CD8-positive, alpha-beta T cell (primary cell): ENCODE measurements at regions of chr5 and their contacts with region 1.

Region 1: GRCh38 chr5:149035372-149035790 is 27.5 kb downstream of the SH3TC2 start:
- DNase-seq: peak; percentile 51 to 80 (median 67)
- ATAC-seq: peak; percentile 52
- H3K4me3 ChIP-seq: no peak overlapping the region
- H3K4me3 Mint-ChIP-seq: no peak overlapping the region
- H3K27ac ChIP-seq: no peak overlapping the region
- H3K27ac Mint-ChIP-seq: no peak overlapping the region
- H3K4me1 ChIP-seq: no peaks in the 10 kb centered on the region
- H3K4me1 Mint-ChIP-seq: peaks cover 15% of the 10 kb centered on the region
- H3K27me3 ChIP-seq: no peaks in the 10 kb centered on the region
- H3K27me3 Mint-ChIP-seq: peaks cover 6% of the 10 kb centered on the region
- CTCF ChIP-seq: peak; percentile 70

Region 2: GRCh38 chr5:148179234-148179824 is 856.1 kb before region 1 on chr5:
- CTCF ChIA-PET with region 1: no interaction called
- POLR2A ChIA-PET with region 1: no interaction called
- intact Hi-C with region 1: loop called (anchors 2 to 5 kb)
- DNase-seq: peak in 3 of 9 experiments; percentile 5 to 64 (median 51)
- ATAC-seq: no peak
- H3K4me3 ChIP-seq: no peak overlapping the region
- H3K4me3 Mint-ChIP-seq: no peak overlapping the region
- H3K27ac ChIP-seq: no peak overlapping the region
- H3K27ac Mint-ChIP-seq: no peak overlapping the region
- H3K4me1 ChIP-seq: no peaks in the 10 kb centered on the region
- H3K4me1 Mint-ChIP-seq: no peaks in the 10 kb centered on the region
- H3K27me3 ChIP-seq: no peaks in the 10 kb centered on the region
- H3K27me3 Mint-ChIP-seq: peaks cover 12% of the 10 kb centered on the region
- CTCF ChIP-seq: peak; percentile 62

Region 3: DNA sequence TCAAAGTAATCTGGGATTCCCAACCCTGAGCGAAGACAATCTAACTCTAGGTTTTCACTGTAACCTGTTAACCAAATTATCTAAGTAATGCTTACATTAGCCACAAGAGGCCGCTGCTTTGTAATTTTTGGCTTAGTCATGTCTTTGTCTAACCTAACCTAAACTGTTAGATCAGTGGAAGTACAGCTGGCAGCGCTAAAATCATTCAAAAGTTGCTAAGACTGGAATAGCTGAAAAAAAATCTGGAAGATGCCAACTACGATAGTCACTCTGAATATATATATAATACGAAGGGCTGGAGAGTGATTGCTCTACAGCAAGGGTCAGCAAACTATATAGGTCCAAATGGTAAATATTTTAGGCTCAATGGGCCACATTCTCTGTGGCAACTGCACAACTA is 591.4 kb before region 1 on chr5:
- CTCF ChIA-PET with region 1: interaction called, 16 read pairs
- POLR2A ChIA-PET with region 1: no interaction called
- intact Hi-C with region 1: loop called (anchors 1 kb)
- DNase-seq: peak in 7 of 9 experiments; percentile 12 to 65 (median 45)
- ATAC-seq: peak; percentile 77
- H3K4me3 ChIP-seq: no peak overlapping the region
- H3K4me3 Mint-ChIP-seq: no peak overlapping the region
- H3K27ac ChIP-seq: no peak overlapping the region
- H3K27ac Mint-ChIP-seq: no peak overlapping the region
- H3K4me1 ChIP-seq: no peaks in the 10 kb centered on the region
- H3K4me1 Mint-ChIP-seq: peaks cover 2% of the 10 kb centered on the region
- H3K27me3 ChIP-seq: no peaks in the 10 kb centered on the region
- H3K27me3 Mint-ChIP-seq: no peaks in the 10 kb centered on the region
- CTCF ChIP-seq: peak; percentile 87

Region 4: DNA sequence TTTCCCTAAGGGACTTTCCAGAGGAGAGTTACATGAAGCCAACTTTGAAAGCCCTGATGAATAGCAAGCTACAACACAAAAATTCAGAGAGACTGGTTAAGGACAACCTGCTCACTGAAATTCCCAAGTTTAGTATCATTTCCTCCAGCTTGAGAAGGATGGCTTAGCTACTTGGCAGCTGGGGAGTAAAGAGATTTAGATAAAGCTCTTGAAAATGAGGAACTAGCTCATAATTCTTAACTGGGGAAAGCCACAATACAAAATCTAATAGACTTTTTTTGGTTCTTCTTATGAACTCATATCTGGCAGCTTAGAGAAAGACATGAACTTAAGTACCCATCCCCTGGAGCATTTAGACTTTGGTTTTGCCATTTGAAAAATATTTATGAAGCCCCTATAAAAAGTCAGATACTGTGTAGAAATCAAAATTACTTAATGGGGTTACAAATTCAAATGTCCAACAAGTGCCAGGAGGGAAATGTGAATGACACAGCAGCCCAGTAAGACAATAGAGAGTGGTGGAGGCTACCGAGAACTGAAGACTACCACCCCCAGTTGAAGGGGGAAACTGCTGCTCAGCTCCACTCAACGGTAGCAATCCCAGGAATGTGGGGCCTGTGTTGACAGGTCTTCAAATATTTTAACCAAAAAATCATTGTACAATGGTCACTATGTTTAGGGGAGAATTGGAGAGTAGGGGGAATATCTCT is 288.4 kb before region 1 on chr5:
- CTCF ChIA-PET with region 1: interaction called, 264 read pairs
- POLR2A ChIA-PET with region 1: no interaction called
- intact Hi-C with region 1: no loop called
- DNase-seq: no peak
- ATAC-seq: no peak
- H3K4me3 ChIP-seq: no peak overlapping the region
- H3K4me3 Mint-ChIP-seq: no peak overlapping the region
- H3K27ac ChIP-seq: no peak overlapping the region
- H3K27ac Mint-ChIP-seq: no peak overlapping the region
- H3K4me1 ChIP-seq: no peaks in the 10 kb centered on the region
- H3K4me1 Mint-ChIP-seq: no peaks in the 10 kb centered on the region
- H3K27me3 ChIP-seq: no peaks in the 10 kb centered on the region
- H3K27me3 Mint-ChIP-seq: peaks cover 5% of the 10 kb centered on the region
- CTCF ChIP-seq: no peak

Region 5: GRCh38 chr5:148937239-148937638 is 98.1 kb before region 1 on chr5:
- CTCF ChIA-PET with region 1: no interaction called
- POLR2A ChIA-PET with region 1: no interaction called
- intact Hi-C with region 1: no loop called
- DNase-seq: no peak
- ATAC-seq: no peak
- H3K4me3 ChIP-seq: no peak overlapping the region
- H3K4me3 Mint-ChIP-seq: no peak overlapping the region
- H3K27ac ChIP-seq: no peak overlapping the region
- H3K27ac Mint-ChIP-seq: no peak overlapping the region
- H3K4me1 ChIP-seq: no peaks in the 10 kb centered on the region
- H3K4me1 Mint-ChIP-seq: no peaks in the 10 kb centered on the region
- H3K27me3 ChIP-seq: no peaks in the 10 kb centered on the region
- H3K27me3 Mint-ChIP-seq: peaks cover 6% of the 10 kb centered on the region
- CTCF ChIP-seq: no peak

Region 6: DNA sequence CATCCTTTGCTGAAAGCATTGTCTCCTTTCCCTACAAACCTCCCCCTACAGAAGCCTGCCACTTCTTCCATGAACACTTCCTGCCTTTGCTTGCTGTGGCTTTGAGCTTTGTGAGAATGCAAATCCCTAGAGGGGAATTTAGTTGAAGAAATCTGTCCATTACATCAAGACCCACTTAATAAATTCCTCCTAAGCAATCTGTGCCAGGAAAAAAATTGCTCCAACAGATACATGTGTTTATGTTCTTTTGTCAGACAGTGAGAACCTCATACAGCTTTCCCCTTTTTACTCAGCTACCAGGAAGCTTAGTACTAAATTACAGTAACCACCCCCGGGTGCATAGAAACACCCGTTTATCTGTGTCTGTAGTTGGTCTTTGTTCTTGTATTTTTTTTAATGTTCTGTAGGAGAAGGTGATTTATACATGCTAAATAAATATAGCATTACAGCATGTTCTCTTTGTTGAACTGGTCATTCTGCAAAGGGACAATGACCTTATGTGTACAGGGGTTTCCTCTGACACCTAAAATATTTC is 16.4 kb before region 1 on chr5:
- CTCF ChIA-PET with region 1: interaction called, 10 read pairs
- POLR2A ChIA-PET with region 1: no interaction called
- intact Hi-C with region 1: no loop called
- DNase-seq: no peak
- ATAC-seq: no peak
- H3K4me3 ChIP-seq: no peak overlapping the region
- H3K4me3 Mint-ChIP-seq: no peak overlapping the region
- H3K27ac ChIP-seq: no peak overlapping the region
- H3K27ac Mint-ChIP-seq: no peak overlapping the region
- H3K4me1 ChIP-seq: no peaks in the 10 kb centered on the region
- H3K4me1 Mint-ChIP-seq: no peaks in the 10 kb centered on the region
- H3K27me3 ChIP-seq: no peaks in the 10 kb centered on the region
- H3K27me3 Mint-ChIP-seq: peaks cover 6% of the 10 kb centered on the region
- CTCF ChIP-seq: no peak

Region 7: GRCh38 chr5:149049371-149049781 is 14.0 kb after region 1 on chr5:
- CTCF ChIA-PET with region 1: interaction called, 20 read pairs
- POLR2A ChIA-PET with region 1: no interaction called
- intact Hi-C with region 1: no loop called
- DNase-seq: no peak
- ATAC-seq: no peak
- H3K4me3 ChIP-seq: no peak overlapping the region
- H3K4me3 Mint-ChIP-seq: no peak overlapping the region
- H3K27ac ChIP-seq: no peak overlapping the region
- H3K27ac Mint-ChIP-seq: no peak overlapping the region
- H3K4me1 ChIP-seq: no peaks in the 10 kb centered on the region
- H3K4me1 Mint-ChIP-seq: no peaks in the 10 kb centered on the region
- H3K27me3 ChIP-seq: no peaks in the 10 kb centered on the region
- H3K27me3 Mint-ChIP-seq: no peaks in the 10 kb centered on the region
- CTCF ChIP-seq: no peak